Heart right ventricle (tissue), 16 donors: ENCODE measurements at regions of chr6 and their contacts with region 1.

Region 1: DNA sequence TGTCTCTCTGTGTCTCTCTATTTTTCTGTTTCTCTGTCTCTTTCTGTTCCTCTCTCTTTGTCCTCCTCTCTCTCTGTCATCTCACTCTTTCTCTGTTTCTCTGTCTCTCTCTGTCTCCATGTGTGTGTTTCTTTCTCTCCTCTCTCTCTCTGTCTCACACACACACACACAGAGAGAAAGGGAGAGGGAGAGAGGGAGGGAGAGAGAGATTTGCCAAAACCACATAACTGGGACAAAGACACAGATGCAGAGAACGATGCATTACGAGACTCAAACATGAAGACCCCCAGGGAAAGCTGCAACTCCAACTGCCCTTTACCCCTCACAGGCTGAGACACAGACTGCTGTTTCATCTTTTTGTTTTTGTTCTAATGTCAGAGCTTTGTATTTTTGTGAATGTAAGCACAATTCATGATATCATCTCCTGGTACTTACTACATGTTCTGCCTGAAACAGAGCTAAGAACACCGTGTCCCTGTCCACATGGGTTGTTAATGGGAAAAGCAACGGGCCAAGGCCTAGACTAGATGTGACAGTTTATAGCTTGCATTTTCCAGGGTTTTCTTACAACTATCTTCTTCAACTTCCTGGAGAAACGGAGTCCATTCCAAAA is 177.1 kb upstream of the ARID1B start:
- DNase-seq: no peak
- ATAC-seq: peak in 5 of 8 donors; percentile 53 to 96 (median 71)
- H3K4me3 ChIP-seq: no peak overlapping the region
- H3K27ac ChIP-seq: peak overlapping the region in 8 of 10 donors; percentile 7 to 70 (median 36)
- H3K4me1 ChIP-seq: peaks cover 0 to 5% (median 0%) of the 10 kb centered on the region in 9 donors
- H3K27me3 ChIP-seq: no peaks in the 10 kb centered on the region
- CTCF ChIP-seq: no peak

Region 2: GRCh38 chr6:155638200-155638599 is 961.9 kb before region 1 on chr6:
- intact Hi-C with region 1: loop called in 1 of 10 experiments (anchors 5 kb)
- DNase-seq: no peak
- ATAC-seq: no peak
- H3K4me3 ChIP-seq: no peak overlapping the region
- H3K27ac ChIP-seq: no peak overlapping the region
- H3K4me1 ChIP-seq: no peaks in the 10 kb centered on the region
- H3K27me3 ChIP-seq: no peaks in the 10 kb centered on the region
- CTCF ChIP-seq: no peak